GM10248 (cell line): ENCODE measurements at regions of chr11 and their contacts with region 1.

Region 1: DNA sequence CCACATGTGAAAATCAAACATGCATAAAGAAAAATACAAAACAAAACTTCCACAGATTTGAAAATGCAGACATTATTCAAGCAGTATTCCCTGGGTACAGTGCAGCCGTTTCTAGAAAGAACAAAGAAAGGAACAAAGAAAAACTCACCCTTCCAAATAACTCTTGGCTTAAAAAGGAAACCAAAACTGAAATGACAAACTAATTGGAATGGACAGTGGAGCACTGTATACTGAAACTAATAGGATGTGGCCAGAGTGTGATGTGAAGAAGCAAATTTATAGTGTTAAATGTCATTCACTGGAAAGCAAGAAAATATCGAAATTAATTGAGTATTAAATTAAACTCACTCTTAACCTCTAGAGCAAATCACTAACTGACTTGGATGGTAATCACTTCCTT is 55.4 kb downstream of the QSER1 start:
- DNase-seq: peak; percentile 10
- CTCF ChIP-seq: no peak

Region 2: DNA sequence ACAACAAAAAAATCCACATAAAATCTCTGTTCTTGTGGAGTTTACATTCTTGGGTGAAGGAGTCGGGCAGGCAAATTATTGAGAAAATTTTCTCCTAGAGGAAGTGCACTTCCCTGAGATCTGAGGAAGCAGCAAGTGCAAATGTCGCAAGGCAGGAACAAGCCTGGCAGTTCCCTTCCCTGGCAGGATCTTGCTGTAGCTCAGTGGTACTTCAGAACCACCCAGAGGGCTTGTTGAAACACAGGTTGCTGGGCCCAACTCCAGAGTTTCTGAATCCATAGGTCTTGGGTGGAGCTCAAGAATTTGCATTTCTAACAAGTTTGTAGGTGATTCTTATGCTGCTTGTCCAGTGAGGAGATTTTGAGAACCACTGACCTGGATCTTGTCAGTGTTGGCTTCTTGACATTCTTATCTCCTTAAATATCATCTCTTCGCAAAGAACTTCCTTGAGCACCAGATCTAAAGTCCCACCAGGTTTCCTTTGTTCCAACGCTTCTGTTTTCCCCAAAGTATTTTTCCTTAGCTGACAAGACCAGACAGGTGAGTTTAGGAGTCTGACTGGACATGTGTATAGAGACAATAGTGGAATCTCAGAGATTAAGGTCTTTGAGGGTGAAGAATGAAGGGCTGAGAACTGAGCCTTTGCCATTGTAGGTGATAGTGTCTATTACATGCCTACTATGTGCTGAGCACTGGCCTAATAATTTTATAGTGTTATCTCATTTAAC is 45.7 kb before region 1 on chr11:
- CTCF ChIA-PET with region 1: no interaction called
- POLR2A ChIA-PET with region 1: no interaction called
- DNase-seq: no peak
- CTCF ChIP-seq: no peak

Region 3: GRCh38 chr11:32960553-32961164 is 12.7 kb after region 1 on chr11:
- CTCF ChIA-PET with region 1: interaction called, 14 read pairs
- POLR2A ChIA-PET with region 1: no interaction called
- DNase-seq: peak; percentile 43
- CTCF ChIP-seq: peak; percentile 63

Region 4: DNA sequence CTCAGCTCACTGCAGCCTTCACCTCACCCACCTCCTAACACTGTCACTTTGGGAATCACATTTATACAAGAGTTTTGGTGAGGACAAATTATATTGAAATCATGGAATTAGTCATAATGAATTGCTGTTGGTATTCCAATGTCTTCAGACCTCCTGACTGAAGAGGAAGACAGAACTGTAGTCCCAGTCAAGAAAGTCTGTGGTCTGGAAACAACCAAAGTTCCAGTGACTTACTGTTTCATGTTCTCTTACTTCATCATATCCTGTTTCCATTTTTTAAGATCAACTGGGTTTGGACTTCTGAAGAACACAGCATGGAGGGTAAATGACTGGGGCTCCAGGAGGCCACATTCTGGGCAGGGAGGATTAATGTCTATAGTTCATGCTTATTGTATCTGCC is 266.2 kb after region 1 on chr11:
- CTCF ChIA-PET with region 1: no interaction called
- POLR2A ChIA-PET with region 1: no interaction called
- DNase-seq: no peak
- CTCF ChIP-seq: no peak